ENCODE measurements at regions of chr17 and their contacts with region 1.

Region 1: DNA sequence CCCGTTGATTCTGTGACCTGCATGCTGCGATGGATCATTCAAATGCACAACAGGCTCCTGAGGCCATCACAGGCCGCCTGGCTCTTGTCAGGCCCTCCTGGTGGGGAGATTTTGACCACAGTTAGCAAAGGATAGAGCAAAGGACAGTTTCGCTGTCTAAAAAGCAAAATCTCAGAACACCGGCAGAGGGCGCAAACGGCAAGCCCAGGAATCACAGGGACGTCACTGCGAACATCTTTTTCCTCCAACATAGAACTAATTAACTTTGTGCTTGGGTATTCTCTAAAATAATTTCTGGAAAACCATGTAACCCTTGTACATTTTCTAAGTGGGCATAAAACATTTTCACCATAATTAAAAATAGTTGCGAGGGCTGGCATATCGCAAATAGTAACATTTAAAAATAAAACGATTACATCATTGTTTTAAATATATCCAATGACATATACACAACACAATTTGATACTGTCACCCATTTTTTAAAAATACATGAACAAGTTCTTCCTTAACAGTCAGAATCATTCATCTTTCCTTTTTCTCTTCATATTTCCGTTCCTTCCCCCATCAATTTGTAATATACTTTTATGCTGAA is 19.7 kb upstream of the SLC47A1 start:
- DNase-seq: peak; percentile 84
- ATAC-seq: peak; percentile 77
- H3K4me3 ChIP-seq: no peak overlapping the region
- H3K27ac ChIP-seq: no peak overlapping the region
- H3K4me1 ChIP-seq: no peaks in the 10 kb centered on the region
- H3K27me3 ChIP-seq: no peaks in the 10 kb centered on the region
- CTCF ChIP-seq: peak; percentile 97

Region 2: GRCh38 chr17:19578545-19578944 is 64.6 kb after region 1 on chr17:
- CTCF ChIA-PET with region 1: no interaction called
- POLR2A ChIA-PET with region 1: no interaction called
- intact Hi-C with region 1: no loop called
- DNase-seq: no peak
- ATAC-seq: no peak
- H3K4me3 ChIP-seq: no peak overlapping the region
- H3K27ac ChIP-seq: no peak overlapping the region
- H3K4me1 ChIP-seq: no peaks in the 10 kb centered on the region
- H3K27me3 ChIP-seq: no peaks in the 10 kb centered on the region
- CTCF ChIP-seq: no peak

Region 3: GRCh38 chr17:19648475-19649406 is 134.7 kb after region 1 on chr17 and contains the start of gene ALDH3A2:
- CTCF ChIA-PET with region 1: no interaction called
- POLR2A ChIA-PET with region 1: no interaction called
- intact Hi-C with region 1: loop called (anchors 2 kb)
- DNase-seq: peak; percentile 97
- ATAC-seq: peak; percentile 85
- H3K4me3 ChIP-seq: peak within 1 kb of the TSS; percentile 90
- H3K27ac ChIP-seq: peak within 1 kb of the TSS; percentile 76
- H3K4me1 ChIP-seq: peaks cover 64% of the 10 kb centered on the region
- H3K27me3 ChIP-seq: no peaks in the 10 kb centered on the region
- CTCF ChIP-seq: 0 out of 2 replicates have a peak, but pooled peaks have one; percentile 29
- total RNA-seq, gene ALDH3A2: 125 and 143 TPM in 2 replicates

Region 4: GRCh38 chr17:19672009-19672750 is 158.2 kb after region 1 on chr17:
- CTCF ChIA-PET with region 1: interaction called, 3 read pairs
- POLR2A ChIA-PET with region 1: no interaction called
- intact Hi-C with region 1: loop called (anchors 10 kb)
- DNase-seq: peak; percentile 60
- ATAC-seq: peak; percentile 76
- H3K4me3 ChIP-seq: no peak overlapping the region
- H3K27ac ChIP-seq: 0 out of 2 replicates have a peak overlapping the region, but pooled peaks have one; percentile 10
- H3K4me1 ChIP-seq: peaks cover 12% of the 10 kb centered on the region
- H3K27me3 ChIP-seq: no peaks in the 10 kb centered on the region
- CTCF ChIP-seq: peak; percentile 64

Region 5: DNA sequence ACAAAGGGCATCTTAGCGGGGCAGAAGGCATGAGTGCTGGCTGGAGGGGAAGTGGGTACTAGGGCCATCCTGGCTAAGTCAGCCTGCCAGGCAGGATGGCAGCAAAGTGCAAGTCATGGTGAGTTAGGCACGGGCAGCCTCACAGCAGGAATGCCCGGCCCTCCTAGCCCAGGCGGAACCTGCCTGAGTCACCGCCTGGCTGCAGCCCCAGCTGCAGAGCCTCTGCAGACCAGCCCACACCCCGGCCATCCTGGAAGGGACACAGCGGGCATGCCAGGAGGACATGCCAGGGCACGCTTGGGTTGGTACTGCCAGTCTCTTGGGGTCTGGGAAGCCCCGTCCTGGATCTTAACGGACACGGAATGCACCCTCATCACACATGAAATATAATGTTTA is 239.1 kb after region 1 on chr17:
- CTCF ChIA-PET with region 1: interaction called, 8 read pairs
- POLR2A ChIA-PET with region 1: no interaction called
- intact Hi-C with region 1: loop called (anchors 5 kb)
- DNase-seq: peak; percentile 99
- ATAC-seq: peak; percentile 88
- H3K4me3 ChIP-seq: peak overlapping the region; percentile 6; the same call in 1 of the 2 replicates
- H3K27ac ChIP-seq: peak overlapping the region; percentile 97
- H3K4me1 ChIP-seq: peaks cover 50% of the 10 kb centered on the region
- H3K27me3 ChIP-seq: no peaks in the 10 kb centered on the region
- CTCF ChIP-seq: no peak

Region 6: DNA sequence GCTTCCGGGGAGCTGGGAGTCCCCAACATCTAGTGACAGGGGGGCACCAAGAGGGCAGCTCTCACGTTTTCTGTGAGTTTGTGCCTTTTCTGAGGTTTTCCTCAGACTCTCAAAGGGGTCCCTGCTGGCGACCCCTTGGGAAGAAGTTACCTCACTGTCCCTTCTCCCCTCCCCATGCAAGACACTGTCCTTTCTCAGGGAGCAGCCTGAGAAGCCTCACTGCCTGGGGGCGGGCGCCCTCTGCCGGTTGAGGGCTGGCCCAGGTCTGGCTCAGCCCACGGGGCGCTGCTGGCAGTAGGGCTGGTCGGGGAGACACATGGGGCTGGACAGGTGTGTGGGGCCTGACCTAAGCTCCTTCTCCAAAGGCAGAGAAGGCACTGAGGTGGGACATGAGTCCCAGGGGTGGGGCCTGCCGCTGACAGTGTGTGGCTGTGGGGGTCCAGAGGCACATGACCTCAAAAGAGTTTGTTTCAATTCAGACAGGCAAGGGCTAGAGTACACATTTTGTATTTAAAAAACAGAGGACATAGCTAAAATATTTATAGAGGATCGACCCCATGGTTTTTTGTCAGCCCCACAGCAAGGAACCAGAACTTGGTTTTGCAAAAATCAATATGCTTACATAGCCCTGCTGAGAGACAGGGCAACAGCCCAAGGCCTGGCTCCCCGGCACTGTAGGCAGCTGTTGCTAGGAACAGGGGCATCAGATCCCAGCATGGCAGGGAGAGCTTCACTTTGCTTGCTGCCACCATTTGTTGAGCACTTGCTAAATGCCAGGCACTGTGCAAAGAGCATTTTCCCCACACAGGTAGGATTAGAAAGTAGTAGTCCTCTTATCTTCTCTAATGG is 252.7 kb after region 1 on chr17:
- CTCF ChIA-PET with region 1: interaction called, 4 read pairs
- POLR2A ChIA-PET with region 1: no interaction called
- intact Hi-C with region 1: loop called (anchors 1 kb)
- DNase-seq: peak; percentile 86
- ATAC-seq: peak; percentile 95
- H3K4me3 ChIP-seq: no peak overlapping the region
- H3K27ac ChIP-seq: no peak overlapping the region
- H3K4me1 ChIP-seq: peaks cover 12% of the 10 kb centered on the region
- H3K27me3 ChIP-seq: no peaks in the 10 kb centered on the region
- CTCF ChIP-seq: peak; percentile 99